SK-N-SH (cell line): ENCODE measurements at regions of chr16 and their contacts with region 1.

Region 1: DNA sequence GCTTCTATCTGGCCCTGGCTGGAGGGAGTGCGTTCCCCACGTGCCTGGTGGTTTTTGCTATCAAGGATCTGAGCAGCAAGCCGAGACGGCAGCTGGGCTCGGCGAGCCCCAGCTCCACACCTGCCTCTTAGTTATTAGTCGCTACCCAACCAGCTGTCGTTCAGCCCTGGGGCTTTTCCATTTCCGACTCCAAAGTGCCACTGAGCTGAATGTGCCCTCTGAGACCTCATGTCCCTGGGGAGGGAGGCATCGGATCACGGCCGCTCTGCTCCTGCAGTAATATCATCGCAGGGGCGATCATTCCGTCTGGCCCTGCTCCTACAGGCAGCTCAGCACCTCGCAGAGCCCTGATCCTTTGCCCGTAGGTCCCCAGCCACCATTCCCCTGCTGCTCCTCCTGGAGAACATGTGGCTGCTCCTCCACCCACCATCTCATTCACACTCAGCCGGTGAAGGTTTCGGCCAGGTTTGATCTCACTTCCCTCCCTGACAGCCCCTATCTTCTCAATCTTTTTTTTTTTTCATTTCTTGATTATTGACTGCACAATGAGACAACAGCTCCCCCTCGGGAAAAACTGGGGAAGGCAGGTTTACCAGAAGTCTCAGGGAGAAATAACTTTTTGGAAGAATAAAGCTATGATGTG is 86.7 kb downstream of the ZFHX3 start:
- DNase-seq: peak; percentile 83
- H3K4me3 ChIP-seq: peak overlapping the region in 1 of 2 experiments; percentile 7; a peak in 1 of 4 replicates
- H3K27ac ChIP-seq: peak overlapping the region in 1 of 2 experiments; percentile 78; a peak in 2 of 4 replicates
- H3K4me1 ChIP-seq: peaks cover 8 to 38% of the 10 kb centered on the region in 2 experiments
- H3K27me3 ChIP-seq: no peaks in the 10 kb centered on the region
- CTCF ChIP-seq: peak; percentile 55
- EP300 ChIP-seq: peak in 1 of 2 experiments; percentile 24; a peak in 1 of 4 replicates
- RAD21 ChIP-seq: peak; percentile 63

Region 2: GRCh38 chr16:72847187-72848027 is 113.8 kb before region 1 on chr16:
- CTCF ChIA-PET with region 1: interaction called, 23 read pairs
- POLR2A ChIA-PET with region 1: no interaction called
- DNase-seq: peak; percentile 70
- H3K4me3 ChIP-seq: no peak overlapping the region
- H3K27ac ChIP-seq: peak overlapping the region; percentile 89 to 92
- H3K4me1 ChIP-seq: peaks cover 19 to 46% of the 10 kb centered on the region in 2 experiments
- H3K27me3 ChIP-seq: no peaks in the 10 kb centered on the region
- CTCF ChIP-seq: peak; percentile 54
- EP300 ChIP-seq: no peak
- RAD21 ChIP-seq: peak; percentile 67